ENCODE measurements at regions of chr5 and their contacts with region 1.

Region 1: GRCh38 chr5:170434966-170435605 is 45.9 kb upstream of the KCNMB1 start:
- DNase-seq: peak; percentile 68
- H3K4me3 ChIP-seq: no peak overlapping the region
- H3K27ac ChIP-seq: no peak overlapping the region
- H3K4me1 ChIP-seq: no peaks in the 10 kb centered on the region
- H3K27me3 ChIP-seq: peaks cover 49% of the 10 kb centered on the region
- CTCF ChIP-seq: peak; percentile 99

Region 2: GRCh38 chr5:170368586-170368985 is 66.5 kb before region 1 on chr5:
- intact Hi-C with region 1: no loop called
- DNase-seq: no peak
- H3K4me3 ChIP-seq: no peak overlapping the region
- H3K27ac ChIP-seq: no peak overlapping the region
- H3K4me1 ChIP-seq: no peaks in the 10 kb centered on the region
- H3K27me3 ChIP-seq: no peaks in the 10 kb centered on the region
- CTCF ChIP-seq: no peak

Region 3: DNA sequence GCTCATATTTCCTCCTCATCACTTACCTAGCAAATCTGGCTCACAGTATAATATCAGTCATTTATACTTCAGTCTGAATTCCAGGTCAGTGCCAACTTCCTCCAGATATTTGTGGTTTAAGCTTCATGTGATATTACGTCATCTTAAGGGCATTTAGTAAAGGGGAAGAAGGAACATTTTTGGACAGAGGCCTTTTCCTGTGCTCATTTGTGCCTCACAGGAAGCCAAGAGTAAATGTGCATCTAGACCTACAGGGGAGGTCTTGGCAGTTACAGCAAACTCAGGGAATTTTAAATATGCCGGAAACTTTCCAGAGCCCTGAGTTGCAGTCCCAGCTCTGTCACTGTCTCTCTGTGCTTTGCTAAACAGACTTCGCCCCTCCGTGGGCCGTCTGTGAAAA is 56.4 kb after region 1 on chr5:
- intact Hi-C with region 1: no loop called
- DNase-seq: no peak
- H3K4me3 ChIP-seq: no peak overlapping the region
- H3K27ac ChIP-seq: peak overlapping the region; percentile 7
- H3K4me1 ChIP-seq: peaks cover 16% of the 10 kb centered on the region
- H3K27me3 ChIP-seq: peaks cover 5% of the 10 kb centered on the region
- CTCF ChIP-seq: no peak

Region 4: GRCh38 chr5:170633235-170634081 is 198.4 kb after region 1 on chr5:
- intact Hi-C with region 1: loop called (anchors 5 kb)
- DNase-seq: peak; percentile 36
- H3K4me3 ChIP-seq: peak overlapping the region; percentile 58
- H3K27ac ChIP-seq: peak overlapping the region; percentile 76
- H3K4me1 ChIP-seq: peaks cover 40% of the 10 kb centered on the region
- H3K27me3 ChIP-seq: no peaks in the 10 kb centered on the region
- CTCF ChIP-seq: peak; percentile 35

Measured in left ventricle myocardium inferior (tissue), 1 donor.